Gastrocnemius medialis (tissue), 4 donors: ENCODE measurements at regions of chr4 and their contacts with region 1.

Region 1: GRCh38 chr4:72896515-72896914 is 173.0 kb downstream of the COX18 start:
- DNase-seq: no peak
- ATAC-seq: peak; percentile 87 to 91
- H3K4me3 ChIP-seq: no peak overlapping the region
- H3K27ac ChIP-seq: peak overlapping the region in 1 of 4 donors; percentile 0
- H3K4me1 ChIP-seq: no peaks in the 10 kb centered on the region
- H3K27me3 ChIP-seq: no peaks in the 10 kb centered on the region
- CTCF ChIP-seq: no peak
- POLR2A ChIP-seq: no peak

Region 2: DNA sequence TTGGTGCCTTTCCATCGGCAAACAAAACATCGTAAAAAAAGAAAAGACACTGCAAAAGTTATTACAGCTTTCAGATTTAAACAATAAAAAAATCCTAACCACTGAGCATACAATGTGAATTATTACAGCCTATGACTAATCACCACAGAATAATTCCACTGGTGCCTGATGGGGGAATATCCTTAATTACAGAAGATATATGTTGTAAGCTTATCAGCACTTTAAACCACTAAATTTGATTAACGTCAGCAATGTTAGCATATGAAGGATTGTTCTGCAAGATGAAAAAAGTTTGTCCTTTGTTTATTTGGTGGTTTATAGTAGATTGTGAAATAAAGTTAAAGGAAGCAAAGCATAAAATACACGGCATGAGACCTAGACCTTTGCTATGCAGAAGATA is 117.3 kb before region 1 on chr4:
- in situ Hi-C with region 1: no loop called
- intact Hi-C with region 1: loop called (anchors 10 kb)
- DNase-seq: no peak
- ATAC-seq: no peak
- H3K4me3 ChIP-seq: no peak overlapping the region
- H3K27ac ChIP-seq: no peak overlapping the region
- H3K4me1 ChIP-seq: no peaks in the 10 kb centered on the region
- H3K27me3 ChIP-seq: no peaks in the 10 kb centered on the region
- CTCF ChIP-seq: no peak
- POLR2A ChIP-seq: no peak